AG04449 (cell line): ENCODE measurements at regions of chr3 and their contacts with region 1.

Region 1: GRCh38 chr3:98657457-98657856 is 64.0 kb upstream of the CPOX start:
- DNase-seq: no peak
- H3K4me3 ChIP-seq: no peak overlapping the region
- CTCF ChIP-seq: peak; percentile 25

Region 2: DNA sequence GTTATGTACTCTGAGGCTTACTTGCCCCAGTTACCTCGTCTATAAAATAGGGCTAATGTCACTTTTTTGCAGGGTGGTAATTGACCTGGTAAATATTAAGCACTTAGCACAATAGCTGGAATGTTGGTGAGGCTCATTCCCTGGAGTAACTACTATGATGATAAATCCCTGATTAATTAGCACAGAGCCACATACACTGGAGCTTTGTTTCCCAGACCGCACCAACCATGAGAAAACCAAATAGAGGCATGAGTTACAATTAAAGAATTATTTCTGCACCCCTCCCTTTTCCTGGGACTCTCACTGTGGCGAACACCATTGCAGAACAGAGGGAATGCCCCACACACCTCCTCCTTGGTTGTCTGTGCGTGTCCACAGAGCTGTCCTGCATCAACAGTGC is 12.6 kb after region 1 on chr3:
- CTCF ChIA-PET with region 1: interaction called, 14 read pairs
- POLR2A ChIA-PET with region 1: no interaction called
- DNase-seq: no peak
- H3K4me3 ChIP-seq: no peak overlapping the region
- CTCF ChIP-seq: no peak